ENCODE measurements at regions of chr16 and their contacts with region 1.

Region 1: DNA sequence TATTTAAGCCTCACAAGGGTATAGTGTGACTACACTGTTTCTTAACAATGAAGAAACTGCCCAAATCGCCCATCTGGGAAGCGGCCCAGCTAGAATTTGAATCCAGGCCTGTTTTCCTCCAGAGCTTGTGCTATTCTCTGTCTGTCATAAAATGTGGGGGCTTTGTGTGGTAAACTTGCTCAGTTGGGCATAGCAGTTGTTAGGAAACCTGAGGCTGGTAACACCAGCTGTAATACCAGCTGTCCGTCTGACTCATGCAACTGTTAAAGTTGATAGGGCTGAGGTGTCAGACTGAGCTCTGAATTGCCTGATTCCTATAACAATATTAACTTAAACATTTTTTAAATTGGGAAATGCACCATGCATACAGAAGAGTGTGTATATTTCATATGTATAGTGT is 9.3 kb downstream of the NOD2 start:
- DNase-seq: no peak
- ATAC-seq: no peak
- H3K4me3 Mint-ChIP-seq: no peak overlapping the region
- H3K27ac Mint-ChIP-seq: no peak overlapping the region
- H3K4me1 Mint-ChIP-seq: peaks cover 38% of the 10 kb centered on the region
- H3K27me3 Mint-ChIP-seq: no peaks in the 10 kb centered on the region
- CTCF ChIP-seq: no peak

Region 2: DNA sequence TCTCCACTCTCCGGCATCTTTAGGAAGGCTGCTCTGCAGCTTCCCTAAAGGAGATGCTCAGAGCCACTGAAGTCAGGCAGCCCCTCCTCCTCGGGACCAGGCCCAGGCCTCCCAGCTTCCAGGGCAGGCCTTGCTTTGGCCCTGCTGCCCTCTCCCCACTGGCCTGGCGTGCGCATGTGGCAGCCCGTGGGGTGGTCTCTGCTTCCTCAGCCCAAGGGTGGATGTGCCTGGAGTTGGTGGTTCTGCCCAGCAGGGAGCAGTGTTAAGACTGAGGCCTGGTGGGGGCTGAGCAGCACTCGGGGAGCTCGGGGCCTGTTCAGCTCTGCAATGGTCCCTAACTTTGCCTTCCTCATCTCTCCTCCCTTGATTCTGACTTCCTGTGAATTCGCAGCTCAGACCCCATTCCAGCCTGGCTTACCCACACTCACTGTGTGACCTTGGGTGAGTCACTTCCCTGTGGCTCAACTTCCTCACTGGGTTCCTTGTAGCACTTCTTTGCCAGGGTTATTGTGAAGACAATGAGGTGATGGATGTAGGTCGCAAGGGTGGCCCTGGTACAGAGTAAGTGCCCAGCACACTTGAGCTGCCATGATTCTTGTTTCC is 91.3 kb before region 1 on chr16:
- CTCF ChIA-PET with region 1: no interaction called
- POLR2A ChIA-PET with region 1: no interaction called
- intact Hi-C with region 1: no loop called
- DNase-seq: no peak
- ATAC-seq: no peak
- H3K4me3 Mint-ChIP-seq: no peak overlapping the region
- H3K27ac Mint-ChIP-seq: no peak overlapping the region
- H3K4me1 Mint-ChIP-seq: peaks cover 5% of the 10 kb centered on the region
- H3K27me3 Mint-ChIP-seq: no peaks in the 10 kb centered on the region
- CTCF ChIP-seq: no peak

Region 3: GRCh38 chr16:50624449-50624970 is 78.2 kb before region 1 on chr16:
- CTCF ChIA-PET with region 1: no interaction called
- POLR2A ChIA-PET with region 1: no interaction called
- intact Hi-C with region 1: no loop called
- DNase-seq: no peak
- ATAC-seq: no peak
- H3K4me3 Mint-ChIP-seq: no peak overlapping the region
- H3K27ac Mint-ChIP-seq: no peak overlapping the region
- H3K4me1 Mint-ChIP-seq: peaks cover 29% of the 10 kb centered on the region
- H3K27me3 Mint-ChIP-seq: no peaks in the 10 kb centered on the region
- CTCF ChIP-seq: no peak

Region 4: DNA sequence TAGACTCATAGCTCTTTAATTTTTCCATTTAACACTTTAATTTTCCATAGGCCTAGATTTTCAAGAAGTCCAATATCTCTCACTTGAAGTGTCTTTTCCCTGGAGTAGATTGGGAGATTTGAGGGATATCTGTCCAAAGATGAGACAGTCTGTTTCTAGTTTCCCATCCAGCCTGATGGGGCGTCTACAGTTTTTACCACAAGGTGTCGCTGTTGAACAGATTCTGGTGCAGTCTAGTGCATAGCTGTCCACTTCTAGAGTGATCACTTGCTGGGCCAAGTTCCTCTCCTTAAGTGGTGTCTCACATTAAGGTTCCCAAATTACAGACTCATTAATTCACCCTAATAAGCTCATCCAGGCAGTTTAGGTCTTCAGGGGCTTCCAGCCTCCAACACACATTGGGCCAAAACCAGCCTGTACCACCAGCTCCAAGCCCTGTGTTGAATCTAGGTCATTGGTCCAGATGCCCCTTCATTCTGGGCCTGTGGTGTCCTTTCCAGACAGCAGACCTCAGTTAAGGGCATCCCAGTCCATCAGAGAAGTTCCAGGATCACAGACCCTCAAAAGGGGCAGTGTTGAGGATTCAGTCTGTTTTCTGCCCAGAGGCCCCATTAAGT is 31.0 kb before region 1 on chr16:
- CTCF ChIA-PET with region 1: interaction called, 11 read pairs
- POLR2A ChIA-PET with region 1: interaction called, 3 read pairs
- intact Hi-C with region 1: no loop called
- DNase-seq: peak; percentile 77
- ATAC-seq: peak; percentile 26
- H3K4me3 Mint-ChIP-seq: no peak overlapping the region
- H3K27ac Mint-ChIP-seq: peak overlapping the region; percentile 61
- H3K4me1 Mint-ChIP-seq: peaks cover 23% of the 10 kb centered on the region
- H3K27me3 Mint-ChIP-seq: no peaks in the 10 kb centered on the region
- CTCF ChIP-seq: peak; percentile 92

Region 5: DNA sequence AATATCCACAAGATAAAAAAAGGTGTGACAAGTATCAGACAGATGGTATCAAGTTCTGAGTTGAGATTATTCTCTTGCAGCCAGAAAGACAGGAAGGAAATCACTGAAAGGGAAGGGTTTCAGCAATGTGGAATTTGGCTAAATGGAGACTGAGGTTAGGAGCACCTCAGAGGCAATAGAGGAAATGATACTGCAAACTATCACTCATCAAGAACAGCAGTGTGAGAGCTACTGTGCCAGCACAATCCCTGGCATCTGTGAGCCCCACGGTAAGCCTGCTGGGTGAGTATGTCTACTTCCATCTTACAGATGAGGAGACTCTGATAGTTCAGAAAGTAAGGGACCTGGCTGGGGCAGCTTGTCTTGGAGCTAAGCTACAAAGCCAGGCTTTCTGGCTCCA is 286.3 kb after region 1 on chr16:
- CTCF ChIA-PET with region 1: no interaction called
- POLR2A ChIA-PET with region 1: no interaction called
- intact Hi-C with region 1: no loop called
- DNase-seq: no peak
- ATAC-seq: no peak
- H3K4me3 Mint-ChIP-seq: no peak overlapping the region
- H3K27ac Mint-ChIP-seq: no peak overlapping the region
- H3K4me1 Mint-ChIP-seq: no peaks in the 10 kb centered on the region
- H3K27me3 Mint-ChIP-seq: no peaks in the 10 kb centered on the region
- CTCF ChIP-seq: no peak